ENCODE measurements at regions of chr2 and their contacts with region 1.

Region 1: GRCh38 chr2:237700512-237701032 is 73.2 kb downstream of the LRRFIP1 start:
- DNase-seq: peak; percentile 84
- H3K4me3 Mint-ChIP-seq: peak overlapping the region; percentile 40
- H3K27ac Mint-ChIP-seq: peak overlapping the region; percentile 86
- H3K4me1 Mint-ChIP-seq: peaks cover 95% of the 10 kb centered on the region
- H3K27me3 Mint-ChIP-seq: no peaks in the 10 kb centered on the region

Region 2: GRCh38 chr2:237427769-237428506 is 272.6 kb before region 1 on chr2:
- CTCF ChIA-PET with region 1: no interaction called
- intact Hi-C with region 1: loop called (anchors 2 kb)
- DNase-seq: peak; percentile 94
- H3K4me3 Mint-ChIP-seq: no peak overlapping the region
- H3K27ac Mint-ChIP-seq: peak overlapping the region; percentile 72
- H3K4me1 Mint-ChIP-seq: peaks cover 80% of the 10 kb centered on the region
- H3K27me3 Mint-ChIP-seq: peaks cover 7% of the 10 kb centered on the region

Region 3: GRCh38 chr2:237731663-237732062 is 31.1 kb after region 1 on chr2:
- CTCF ChIA-PET with region 1: interaction called, 3 read pairs
- intact Hi-C with region 1: loop called (anchors 1 kb)
- DNase-seq: peak; percentile 66
- H3K4me3 Mint-ChIP-seq: no peak overlapping the region
- H3K27ac Mint-ChIP-seq: peak overlapping the region; percentile 17
- H3K4me1 Mint-ChIP-seq: peaks cover 46% of the 10 kb centered on the region
- H3K27me3 Mint-ChIP-seq: no peaks in the 10 kb centered on the region

Region 4: GRCh38 chr2:237744613-237745249 is 44.2 kb after region 1 on chr2:
- CTCF ChIA-PET with region 1: interaction called, 16 read pairs
- intact Hi-C with region 1: loop called (anchors 1 kb)
- DNase-seq: peak; percentile 86
- H3K4me3 Mint-ChIP-seq: no peak overlapping the region
- H3K27ac Mint-ChIP-seq: peak overlapping the region; percentile 76
- H3K4me1 Mint-ChIP-seq: peaks cover 36% of the 10 kb centered on the region
- H3K27me3 Mint-ChIP-seq: no peaks in the 10 kb centered on the region

Measured in activated naive CD4-positive, alpha-beta T cell treated with anti-CD3 and anti-CD28 coated beads for 36 hours (primary cell).